ENCODE measurements at regions of chr1 and their contacts with region 1.

Region 1: DNA sequence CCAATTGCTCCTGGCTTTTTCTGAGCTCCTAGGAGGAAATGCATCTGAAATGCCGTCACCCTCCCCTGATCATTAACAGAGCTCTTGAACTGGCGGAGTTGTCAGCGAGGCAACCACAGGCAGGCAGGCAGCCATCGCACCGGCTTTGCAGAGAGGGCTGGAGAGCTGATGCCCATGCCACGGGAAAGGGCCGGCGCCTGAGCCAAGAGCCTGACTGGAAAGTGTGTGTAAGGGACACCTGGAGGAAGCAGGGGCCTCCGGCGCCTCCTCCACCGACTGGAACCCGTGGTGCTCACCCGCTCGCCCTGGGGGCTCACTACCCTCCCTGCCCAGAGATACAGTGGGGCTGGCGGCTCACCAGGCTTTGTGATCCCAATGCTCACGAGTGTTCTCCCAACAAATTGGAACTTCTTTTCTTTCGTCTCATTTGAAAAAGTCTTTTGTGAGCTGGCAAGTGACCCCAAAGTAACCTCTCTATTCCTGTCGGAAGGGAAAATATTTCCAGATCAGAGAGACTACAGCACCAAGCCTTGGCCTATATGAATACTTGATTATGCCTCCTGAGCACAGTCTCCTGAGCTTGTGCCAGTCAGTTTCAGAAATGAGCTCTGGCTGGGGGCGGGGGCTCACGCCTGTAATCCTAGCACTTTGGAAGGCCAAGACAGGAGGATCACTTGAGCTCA is 97.7 kb upstream of the SLC25A33 start:
- DNase-seq: no peak
- ATAC-seq: peak; percentile 27; the same call in 1 of the 2 replicates
- H3K4me3 ChIP-seq: peak overlapping the region in 1 of 2 experiments; percentile 15; a peak in 1 of 4 replicates
- H3K27ac ChIP-seq: peak overlapping the region; percentile 67
- H3K4me1 ChIP-seq: peaks cover 57% of the 10 kb centered on the region
- H3K27me3 ChIP-seq: no peaks in the 10 kb centered on the region
- CTCF ChIP-seq: no peak

Region 2: GRCh38 chr1:9481048-9481447 is 39.5 kb after region 1 on chr1:
- CTCF ChIA-PET with region 1: no interaction called
- POLR2A ChIA-PET with region 1: interaction called, 10 read pairs
- in situ Hi-C with region 1: no loop called
- intact Hi-C with region 1: no loop called
- DNase-seq: no peak
- ATAC-seq: no peak
- H3K4me3 ChIP-seq: no peak overlapping the region
- H3K27ac ChIP-seq: peak overlapping the region; percentile 45; the same call in 1 of the 2 replicates
- H3K4me1 ChIP-seq: peaks cover 28% of the 10 kb centered on the region
- H3K27me3 ChIP-seq: no peaks in the 10 kb centered on the region
- CTCF ChIP-seq: no peak

Measured in Panc1 (cell line).